Sigmoid colon (tissue), 7 donors: ENCODE measurements at regions of chr2 and their contacts with region 1.

Region 1: DNA sequence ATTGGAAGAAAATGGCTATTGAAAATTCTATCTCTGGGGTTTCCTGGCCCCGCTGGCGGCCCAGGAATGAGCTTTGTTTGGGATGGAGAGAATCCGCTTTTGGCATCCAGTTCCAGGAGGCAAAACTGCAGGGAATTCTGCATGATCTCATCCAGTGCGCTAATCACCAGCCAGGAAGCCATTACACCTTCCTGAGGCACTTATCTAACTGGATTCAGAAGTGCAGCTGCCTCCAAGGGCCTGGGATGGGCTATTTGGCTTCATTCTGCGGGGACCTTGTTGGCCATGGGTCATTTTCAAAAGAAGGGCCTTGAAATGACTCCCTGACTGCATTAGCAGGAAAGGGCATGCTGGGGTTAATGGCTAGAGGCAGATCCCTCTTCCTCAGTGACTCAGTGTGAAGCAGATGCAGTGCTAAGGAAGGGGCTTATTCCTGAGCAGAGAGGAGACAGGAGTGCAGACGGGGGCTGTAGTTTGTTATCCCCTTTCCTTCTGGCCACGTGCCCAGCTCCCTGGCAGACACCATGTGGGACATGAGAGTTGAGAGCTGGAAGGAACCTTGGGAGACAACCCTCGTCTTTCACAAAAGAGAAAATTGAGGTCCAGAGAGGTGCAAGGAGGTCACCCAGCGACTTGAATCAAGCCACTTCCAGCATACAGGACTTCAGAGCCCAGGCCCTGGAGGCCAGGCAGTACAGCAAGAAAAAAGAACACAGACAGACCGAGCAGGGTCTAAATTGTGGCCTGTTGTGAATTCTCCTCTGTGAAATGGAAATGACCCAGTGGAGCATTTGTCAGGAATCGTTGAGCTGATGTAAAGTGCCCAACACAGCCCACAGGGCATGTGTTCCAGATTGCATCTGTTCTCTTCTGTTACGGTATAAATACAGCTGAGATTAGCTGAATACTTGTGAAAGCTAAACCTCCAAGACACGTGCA is 161.8 kb downstream of the PRKCE start:
- DNase-seq: peak; percentile 77
- H3K4me3 ChIP-seq: no peak overlapping the region
- H3K27ac ChIP-seq: peak overlapping the region; percentile 39 to 87 (median 74)
- H3K4me1 ChIP-seq: peaks cover 0 to 84% (median 71%) of the 10 kb centered on the region in 4 donors
- H3K27me3 ChIP-seq: no peaks in the 10 kb centered on the region
- CTCF ChIP-seq: no peak
- EP300 ChIP-seq: no peak
- POLR2A ChIP-seq: no peak

Region 2: DNA sequence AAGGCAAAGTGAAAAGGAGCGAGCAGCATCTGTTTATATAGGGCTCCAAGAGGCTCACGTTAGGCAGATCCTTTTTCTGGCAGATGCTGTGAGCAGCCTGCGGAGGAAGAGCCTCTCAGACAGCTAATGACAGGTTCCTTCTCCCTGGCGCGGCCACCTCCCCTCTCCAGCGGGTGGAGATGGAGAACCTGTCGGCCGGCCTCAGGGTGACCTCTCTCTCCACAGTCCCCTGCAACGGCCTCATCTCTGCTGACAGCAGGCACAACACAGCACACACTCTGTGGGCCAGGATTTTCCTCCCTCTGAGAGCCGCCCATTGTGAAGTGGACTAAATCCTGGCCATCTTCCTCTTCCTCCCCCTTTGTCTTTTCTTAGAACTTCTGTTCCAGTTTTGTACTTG is 42.0 kb before region 1 on chr2:
- intact Hi-C with region 1: loop called (anchors 5 kb)
- DNase-seq: peak; percentile 90
- H3K4me3 ChIP-seq: peak overlapping the region; percentile 11 to 37 (median 28)
- H3K27ac ChIP-seq: peak overlapping the region; percentile 74 to 89 (median 82)
- H3K4me1 ChIP-seq: peaks cover 0 to 50% (median 33%) of the 10 kb centered on the region in 4 donors
- H3K27me3 ChIP-seq: no peaks in the 10 kb centered on the region
- CTCF ChIP-seq: no peak
- EP300 ChIP-seq: peak in 1 of 4 donors; percentile 3
- POLR2A ChIP-seq: no peak